Common myeloid progenitor, CD34-positive (primary cell): ENCODE measurements at regions of chr15 and their contacts with region 1.

Region 1: DNA sequence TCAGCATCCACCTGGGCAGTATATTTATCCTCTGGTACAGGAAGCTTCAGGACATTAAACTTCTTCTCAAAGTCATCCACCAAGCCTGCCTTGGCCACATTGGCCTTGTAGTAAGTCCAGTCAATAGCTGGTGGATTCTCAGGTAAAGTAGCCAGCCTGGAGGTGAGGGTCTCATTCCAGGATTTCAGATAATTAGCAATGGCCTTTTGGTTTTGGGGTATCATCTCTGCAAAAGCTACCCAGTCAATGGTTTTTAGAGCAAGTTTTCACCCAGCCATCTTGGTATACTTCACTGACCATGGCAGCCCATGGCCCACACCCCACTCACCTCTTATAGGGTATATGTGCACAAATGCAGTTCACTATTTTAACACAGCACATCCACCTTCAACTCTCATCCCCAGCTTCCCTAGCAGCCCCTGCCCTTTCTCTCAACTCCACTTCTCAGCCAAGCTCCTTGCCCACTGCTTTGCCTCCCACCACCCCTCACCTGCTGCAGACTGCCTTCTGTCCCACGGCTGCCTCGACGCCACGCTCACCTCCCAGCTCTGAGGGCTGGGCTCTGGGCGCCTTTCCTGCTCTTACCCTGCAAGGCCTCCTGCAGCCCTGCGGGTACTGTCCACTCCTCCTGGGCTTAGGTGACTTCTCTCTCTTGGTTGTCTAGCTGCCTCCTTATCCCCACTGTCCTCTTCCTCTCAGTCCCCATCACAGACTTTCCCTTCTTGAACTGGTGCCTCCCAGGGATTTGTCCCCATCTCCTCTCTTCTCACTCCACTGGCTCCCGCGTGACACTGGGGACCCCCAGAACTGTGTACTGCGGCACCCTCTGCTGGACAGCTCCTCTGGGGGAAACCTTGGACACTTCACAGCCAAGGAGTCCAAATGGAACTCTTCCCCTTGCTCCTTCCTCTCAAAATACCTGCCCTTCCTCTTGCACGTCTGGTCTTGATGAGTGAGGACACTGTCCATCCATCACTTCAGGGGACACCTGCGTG is 1.7 kb upstream of the TGM5 start:
- DNase-seq: peak; percentile 49 to 62 (median 60)
- H3K4me3 ChIP-seq: no peak overlapping the region
- H3K27ac ChIP-seq: no peak overlapping the region
- H3K4me1 ChIP-seq: peaks cover 8 to 36% (median 21%) of the 10 kb centered on the region in 4 experiments
- H3K27me3 ChIP-seq: peaks cover 0 to 2% (median 0%) of the 10 kb centered on the region in 5 experiments

Region 2: GRCh38 chr15:42914728-42915497 is 353.5 kb before region 1 on chr15:
- CTCF ChIA-PET with region 1: no interaction called
- POLR2A ChIA-PET with region 1: no interaction called
- DNase-seq: peak in 2 of 3 donors; percentile 47 to 55
- H3K4me3 ChIP-seq: peak overlapping the region in 6 of 7 experiments; percentile 2 to 71 (median 44)
- H3K27ac ChIP-seq: peak overlapping the region; percentile 40 to 56
- H3K4me1 ChIP-seq: peaks cover 9 to 38% (median 23%) of the 10 kb centered on the region in 4 experiments
- H3K27me3 ChIP-seq: no peaks in the 10 kb centered on the region

Region 3: GRCh38 chr15:43185157-43186017 is 83.0 kb before region 1 on chr15 and contains the start of gene CCNDBP1:
- CTCF ChIA-PET with region 1: interaction called, 10 read pairs
- POLR2A ChIA-PET with region 1: no interaction called
- DNase-seq: peak; percentile 88 to 94 (median 91)
- H3K4me3 ChIP-seq: peak within 1 kb of the TSS; percentile 67 to 87 (median 81)
- H3K27ac ChIP-seq: peak within 1 kb of the TSS; percentile 59 to 89
- H3K4me1 ChIP-seq: peaks cover 6 to 20% (median 15%) of the 10 kb centered on the region in 4 experiments
- H3K27me3 ChIP-seq: no peaks in the 10 kb centered on the region

Region 4: DNA sequence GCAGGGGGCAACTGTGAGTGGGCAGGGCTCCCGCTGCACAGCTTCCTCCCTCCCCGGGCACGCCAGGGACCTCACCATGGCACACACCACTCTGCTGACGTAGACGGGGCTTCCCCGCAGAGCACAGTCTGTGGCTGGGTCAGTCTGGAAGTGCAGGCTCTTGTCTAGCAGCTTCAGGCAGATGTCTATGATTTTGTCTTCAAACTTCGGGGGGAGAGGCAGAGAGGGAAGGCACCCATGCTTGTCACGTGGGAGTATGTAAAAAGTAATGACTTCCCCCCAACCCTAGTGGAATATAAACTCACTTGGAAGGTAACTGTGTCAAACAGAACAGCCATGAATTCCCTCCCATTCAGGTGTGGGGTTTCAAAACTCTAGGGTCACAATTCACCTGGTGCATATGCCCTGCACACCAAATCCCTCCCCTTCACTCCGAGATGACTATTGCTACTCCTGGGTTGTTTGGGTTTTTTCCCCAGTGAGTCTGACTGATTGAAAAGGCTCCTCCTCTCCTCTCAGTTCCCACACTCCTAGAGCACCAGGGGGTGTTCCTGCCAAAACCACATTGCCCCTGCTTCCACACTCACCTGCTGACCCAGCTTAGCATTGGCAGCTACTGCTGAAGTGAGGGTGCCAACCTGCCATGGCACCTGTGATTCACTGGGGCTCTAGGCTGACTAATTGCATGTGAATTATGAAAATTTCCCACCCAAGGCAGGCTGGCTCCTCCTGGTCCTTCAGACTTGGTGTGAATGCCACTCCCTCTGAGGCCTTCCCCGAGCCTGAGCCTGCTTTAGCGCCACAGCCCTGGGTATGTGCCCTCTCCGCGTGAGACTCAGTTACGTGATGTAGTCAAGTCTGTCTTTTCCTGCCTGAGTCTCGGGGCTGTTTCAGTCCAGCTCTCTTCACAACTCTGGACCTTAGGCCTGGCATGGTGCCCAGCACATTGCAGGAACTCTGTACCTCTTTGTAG is 14.7 kb before region 1 on chr15:
- CTCF ChIA-PET with region 1: interaction called, 28 read pairs
- POLR2A ChIA-PET with region 1: no interaction called
- DNase-seq: peak in 2 of 3 donors; percentile 42 to 51
- H3K4me3 ChIP-seq: no peak overlapping the region
- H3K27ac ChIP-seq: no peak overlapping the region
- H3K4me1 ChIP-seq: peaks cover 0 to 51% (median 19%) of the 10 kb centered on the region in 4 experiments
- H3K27me3 ChIP-seq: no peaks in the 10 kb centered on the region